Dorsolateral prefrontal cortex (tissue), 120 donors: ENCODE measurements at regions of chr1 and their contacts with region 1.

Region 1: GRCh38 chr1:15885701-15886610 is 38.4 kb downstream of the SPEN start:
- DNase-seq: peak; percentile 93 to 96 (median 96)
- H3K4me3 ChIP-seq: peak overlapping the region; percentile 13 to 71 (median 51)
- H3K27ac ChIP-seq: peak overlapping the region; percentile 80 to 99 (median 96)
- H3K27me3 ChIP-seq: no peaks in the 10 kb centered on the region
- CTCF ChIP-seq: peak in 38 of 56 donors; percentile 10 to 46 (median 26)

Region 2: GRCh38 chr1:15417365-15417934 is 468.5 kb before region 1 on chr1:
- intact Hi-C with region 1: no loop called
- DNase-seq: no peak
- H3K4me3 ChIP-seq: no peak overlapping the region
- H3K27ac ChIP-seq: peak overlapping the region in 22 of 59 donors; percentile 5 to 78 (median 43)
- H3K27me3 ChIP-seq: no peaks in the 10 kb centered on the region
- CTCF ChIP-seq: no peak

Region 3: DNA sequence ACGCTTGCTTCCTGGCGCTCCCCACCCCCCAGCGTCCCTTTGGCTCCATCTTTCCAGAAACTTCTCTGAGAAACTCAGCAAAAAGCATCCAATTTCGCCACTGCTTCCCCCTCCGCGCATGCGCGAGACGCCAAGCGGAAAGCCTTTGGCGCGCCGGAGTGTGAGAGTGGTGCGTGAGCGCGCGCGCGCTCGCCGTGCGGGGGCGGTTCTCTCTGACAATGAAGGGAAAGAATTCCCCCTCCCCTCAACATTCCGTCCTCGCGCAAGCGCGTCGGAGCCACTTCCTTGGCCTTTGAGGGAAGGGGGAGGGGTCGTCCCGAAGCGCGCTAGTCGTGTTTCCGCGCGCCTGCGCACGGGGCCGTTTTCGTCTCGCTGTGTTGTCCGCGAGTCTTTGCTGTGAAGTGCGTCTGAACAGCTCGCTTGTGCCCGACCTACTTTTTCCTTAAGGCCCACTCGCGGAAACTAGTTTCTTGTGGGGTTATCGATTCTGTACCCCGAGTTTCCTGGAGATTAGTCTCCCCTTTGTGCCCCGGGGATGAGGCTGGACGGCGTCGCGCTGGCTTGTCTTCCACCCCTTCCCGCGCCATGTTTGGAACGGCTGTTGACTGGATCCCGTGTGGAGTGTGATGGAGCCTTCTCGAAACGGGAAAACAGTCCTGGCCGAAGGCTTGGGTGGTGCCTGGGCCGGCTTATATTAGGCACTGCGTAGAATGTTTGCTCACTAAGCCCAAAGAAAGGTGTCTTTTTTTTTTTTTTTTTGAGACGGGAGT is 50.0 kb before region 1 on chr1:
- intact Hi-C with region 1: loop called in 1 of 2 experiments (anchors 1 kb)
- DNase-seq: peak; percentile 97 to 99 (median 98)
- H3K4me3 ChIP-seq: peak overlapping the region; percentile 64 to 95 (median 83)
- H3K27ac ChIP-seq: peak overlapping the region; percentile 97 to 100 (median 100)
- H3K27me3 ChIP-seq: no peaks in the 10 kb centered on the region
- CTCF ChIP-seq: peak in 18 of 56 donors; percentile 5 to 46 (median 20)

Region 4: GRCh38 chr1:15847100-15847892 is 38.7 kb before region 1 on chr1 and contains the start of gene SPEN:
- intact Hi-C with region 1: loop called (anchors 2 kb)
- DNase-seq: peak; percentile 91 to 98 (median 96)
- H3K4me3 ChIP-seq: peak within 1 kb of the TSS; percentile 63 to 99 (median 91)
- H3K27ac ChIP-seq: peak within 1 kb of the TSS; percentile 88 to 99 (median 98)
- H3K27me3 ChIP-seq: no peaks in the 10 kb centered on the region
- CTCF ChIP-seq: peak in 22 of 56 donors; percentile 6 to 43 (median 22)
- total RNA-seq, gene SPEN: 64.4 to 134 (median 84.8) TPM

Region 5: GRCh38 chr1:15937706-15938168 is 51.8 kb after region 1 on chr1:
- intact Hi-C with region 1: loop called in 1 of 2 experiments (anchors 5 kb)
- DNase-seq: no peak
- H3K4me3 ChIP-seq: no peak overlapping the region
- H3K27ac ChIP-seq: peak overlapping the region in 58 of 59 donors; percentile 31 to 90 (median 77)
- H3K27me3 ChIP-seq: no peaks in the 10 kb centered on the region
- CTCF ChIP-seq: peak in 20 of 56 donors; percentile 1 to 39 (median 18)

Region 6: GRCh38 chr1:15949453-15950245 is 63.7 kb after region 1 on chr1:
- intact Hi-C with region 1: loop called in 1 of 2 experiments (anchors 5 kb)
- DNase-seq: peak in 9 of 10 donors; percentile 44 to 91 (median 67)
- H3K4me3 ChIP-seq: peak overlapping the region in 33 of 59 donors; percentile 0 to 39 (median 21)
- H3K27ac ChIP-seq: peak overlapping the region; percentile 75 to 96 (median 90)
- H3K27me3 ChIP-seq: no peaks in the 10 kb centered on the region
- CTCF ChIP-seq: peak in 1 of 56 donors; percentile 5

Region 7: GRCh38 chr1:15966081-15966955 is 80.4 kb after region 1 on chr1:
- intact Hi-C with region 1: loop called in 1 of 2 experiments (anchors 5 kb)
- DNase-seq: no peak
- H3K4me3 ChIP-seq: peak overlapping the region in 34 of 59 donors; percentile 1 to 48 (median 16)
- H3K27ac ChIP-seq: peak overlapping the region; percentile 0 to 98 (median 93)
- H3K27me3 ChIP-seq: no peaks in the 10 kb centered on the region
- CTCF ChIP-seq: peak in 1 of 56 donors; percentile 6